ENCODE measurements at regions of chr2 and their contacts with region 1.

Region 1: DNA sequence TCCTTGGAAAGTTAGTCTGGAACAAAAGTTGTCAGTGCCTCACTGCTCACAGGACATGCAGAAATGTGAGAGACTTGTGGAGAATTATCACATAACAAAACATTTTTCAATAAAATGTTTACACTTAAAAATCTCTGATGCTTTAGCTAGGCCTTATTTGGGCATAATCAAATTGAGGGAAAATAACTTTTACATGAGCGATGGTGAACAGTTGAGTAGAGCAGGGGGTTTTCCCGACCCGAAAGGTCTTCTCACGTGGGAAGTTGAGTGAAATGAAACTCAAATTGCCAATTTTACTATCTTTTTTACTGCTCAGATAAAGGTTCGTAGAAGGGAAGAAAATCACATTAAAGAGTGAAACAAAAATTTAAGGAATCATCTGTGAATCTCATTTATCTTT is 465.6 kb downstream of the MTX2 start:
- DNase-seq: no peak
- ATAC-seq: no peak

Region 2: DNA sequence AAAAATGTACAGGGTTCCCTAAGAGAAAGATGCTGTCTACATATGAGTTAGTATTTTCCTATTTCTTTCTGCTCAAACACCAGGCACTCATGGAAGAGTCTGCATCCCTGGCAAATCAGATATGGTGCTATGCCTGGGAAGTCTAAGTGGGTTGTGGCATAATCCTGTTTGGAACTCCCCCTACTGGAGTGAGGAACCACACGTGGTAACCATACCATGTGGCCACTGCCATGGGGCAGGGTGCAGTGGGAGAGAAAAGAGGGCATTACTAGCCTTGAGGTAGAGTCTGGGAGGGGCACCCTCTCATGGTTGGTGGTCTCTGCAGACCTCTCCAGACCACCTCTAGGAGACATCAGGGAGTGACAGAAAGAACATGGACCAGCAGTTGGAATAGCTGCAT is 1295.5 kb before region 1 on chr2:
- intact Hi-C with region 1: loop called (anchors 5 kb)
- DNase-seq: no peak
- ATAC-seq: no peak